ENCODE measurements at regions of chr3 and their contacts with region 1.

Region 1: GRCh38 chr3:186617038-186617946 is 4.4 kb downstream of the AHSG start:
- DNase-seq: peak; percentile 87
- H3K4me3 Mint-ChIP-seq: peak overlapping the region; percentile 9
- H3K27ac Mint-ChIP-seq: no peak overlapping the region
- H3K4me1 Mint-ChIP-seq: peaks cover 24% of the 10 kb centered on the region
- H3K27me3 Mint-ChIP-seq: peaks cover 41% of the 10 kb centered on the region

Region 2: GRCh38 chr3:186440891-186441290 is 176.4 kb before region 1 on chr3:
- CTCF ChIA-PET with region 1: no interaction called
- POLR2A ChIA-PET with region 1: no interaction called
- DNase-seq: no peak
- H3K4me3 Mint-ChIP-seq: no peak overlapping the region
- H3K27ac Mint-ChIP-seq: no peak overlapping the region
- H3K4me1 Mint-ChIP-seq: no peaks in the 10 kb centered on the region
- H3K27me3 Mint-ChIP-seq: peaks cover 3% of the 10 kb centered on the region

Region 3: DNA sequence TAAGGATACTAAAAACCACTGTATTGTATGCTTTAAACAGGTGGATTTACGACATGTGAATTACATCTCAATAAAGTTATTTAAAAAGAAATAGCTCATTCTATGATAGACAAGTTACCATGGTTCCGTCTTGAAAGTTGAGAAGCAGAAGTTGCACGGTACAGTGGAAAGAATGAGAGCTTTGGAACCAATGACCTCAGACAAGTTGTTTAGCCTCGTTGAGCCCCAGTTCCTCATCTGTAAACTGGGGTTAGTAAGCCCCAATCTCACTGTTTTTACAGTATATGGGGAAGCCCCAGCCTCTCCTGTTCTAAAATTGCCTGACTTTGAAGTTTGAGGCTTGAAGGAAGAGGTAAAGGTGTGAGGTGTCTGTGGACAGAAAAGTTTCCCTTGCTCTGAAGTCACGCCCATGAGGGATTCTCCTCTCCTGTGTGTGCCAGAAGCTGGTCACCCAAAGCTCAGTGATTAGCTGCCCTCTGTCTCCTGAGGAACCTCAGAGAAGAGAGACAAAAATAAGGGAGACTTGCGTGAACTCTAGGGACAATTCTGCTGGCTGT is 83.1 kb before region 1 on chr3:
- CTCF ChIA-PET with region 1: interaction called, 44 read pairs
- POLR2A ChIA-PET with region 1: no interaction called
- DNase-seq: peak; percentile 31
- H3K4me3 Mint-ChIP-seq: no peak overlapping the region
- H3K27ac Mint-ChIP-seq: no peak overlapping the region
- H3K4me1 Mint-ChIP-seq: peaks cover 26% of the 10 kb centered on the region
- H3K27me3 Mint-ChIP-seq: no peaks in the 10 kb centered on the region

Region 4: GRCh38 chr3:186589121-186589520 is 28.2 kb before region 1 on chr3:
- CTCF ChIA-PET with region 1: interaction called, 53 read pairs
- POLR2A ChIA-PET with region 1: interaction called, 3 read pairs
- DNase-seq: no peak
- H3K4me3 Mint-ChIP-seq: no peak overlapping the region
- H3K27ac Mint-ChIP-seq: no peak overlapping the region
- H3K4me1 Mint-ChIP-seq: peaks cover 24% of the 10 kb centered on the region
- H3K27me3 Mint-ChIP-seq: peaks cover 2% of the 10 kb centered on the region

Region 5: GRCh38 chr3:186630950-186631641 is 13.8 kb after region 1 on chr3:
- CTCF ChIA-PET with region 1: interaction called, 41 read pairs
- POLR2A ChIA-PET with region 1: no interaction called
- DNase-seq: no peak
- H3K4me3 Mint-ChIP-seq: no peak overlapping the region
- H3K27ac Mint-ChIP-seq: no peak overlapping the region
- H3K4me1 Mint-ChIP-seq: no peaks in the 10 kb centered on the region
- H3K27me3 Mint-ChIP-seq: peaks cover 25% of the 10 kb centered on the region

Region 6: DNA sequence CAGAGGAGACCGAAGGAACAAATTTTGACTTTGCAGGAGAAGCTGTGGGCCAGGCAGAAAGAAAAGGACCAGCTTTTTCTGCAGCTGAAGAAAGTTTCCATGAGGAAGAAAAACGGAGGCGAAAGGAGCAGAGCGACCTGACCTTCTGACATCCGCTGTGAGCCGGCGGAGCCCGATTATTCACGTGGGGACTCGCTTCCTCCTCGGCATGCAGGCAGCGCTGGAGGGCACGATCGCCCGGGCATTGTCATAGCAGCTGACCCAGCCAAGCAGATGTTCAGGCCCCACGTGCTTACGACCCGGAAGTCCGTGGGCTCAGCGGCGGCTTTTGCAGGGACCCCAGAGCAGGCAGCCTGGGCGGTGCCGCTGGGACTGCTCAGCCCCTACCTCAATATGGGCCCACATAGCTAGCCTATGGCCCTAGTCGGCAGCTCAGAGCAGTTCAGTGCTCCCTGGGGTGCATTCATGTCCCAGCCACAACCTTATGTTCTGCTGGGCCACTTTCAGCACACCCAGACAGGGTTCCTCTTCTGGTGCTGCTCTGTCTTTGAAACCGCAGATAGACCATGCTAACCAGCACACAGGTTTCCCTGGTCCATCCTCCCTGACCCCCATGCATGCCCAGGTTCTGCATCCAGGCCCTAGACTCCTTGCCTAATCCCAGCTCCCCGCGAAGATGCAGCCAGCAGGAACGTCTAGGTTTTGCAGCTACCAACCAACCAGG is 155.6 kb after region 1 on chr3:
- CTCF ChIA-PET with region 1: interaction called, 18 read pairs
- POLR2A ChIA-PET with region 1: interaction called, 10 read pairs
- DNase-seq: peak; percentile 74
- H3K4me3 Mint-ChIP-seq: peak overlapping the region; percentile 77
- H3K27ac Mint-ChIP-seq: peak overlapping the region; percentile 77
- H3K4me1 Mint-ChIP-seq: peaks cover 16% of the 10 kb centered on the region
- H3K27me3 Mint-ChIP-seq: no peaks in the 10 kb centered on the region

Region 7: GRCh38 chr3:186826976-186827731 is 209.9 kb after region 1 on chr3:
- CTCF ChIA-PET with region 1: interaction called, 117 read pairs
- POLR2A ChIA-PET with region 1: interaction called, 7 read pairs
- DNase-seq: peak; percentile 89
- H3K4me3 Mint-ChIP-seq: peak overlapping the region; percentile 75
- H3K27ac Mint-ChIP-seq: peak overlapping the region; percentile 57
- H3K4me1 Mint-ChIP-seq: peaks cover 27% of the 10 kb centered on the region
- H3K27me3 Mint-ChIP-seq: peaks cover 39% of the 10 kb centered on the region